Sciatic nerve (tissue), 2 donors: ENCODE measurements at regions of chr12 and their contacts with region 1.

Region 1: DNA sequence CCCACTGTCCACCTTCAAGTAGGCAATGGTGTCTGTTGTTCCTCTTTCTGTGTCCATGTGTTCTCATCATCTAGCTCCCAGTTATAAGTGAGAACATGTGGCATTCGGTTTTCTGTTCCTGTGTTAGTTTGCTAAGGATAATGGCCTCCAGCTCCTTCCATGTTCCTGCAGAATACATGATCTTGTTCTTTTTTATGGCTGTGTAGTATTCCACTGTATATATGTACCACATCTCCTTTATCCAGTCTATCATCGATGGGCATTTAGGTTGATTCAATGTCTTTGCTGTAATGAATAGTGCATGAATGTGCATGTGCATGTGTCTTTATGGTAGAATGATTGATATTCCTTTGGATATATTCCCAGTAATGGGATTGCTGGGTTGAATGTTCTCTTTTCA is 123.3 kb upstream of the LHX5 start:
- DNase-seq: no peak
- ATAC-seq: no peak

Region 2: DNA sequence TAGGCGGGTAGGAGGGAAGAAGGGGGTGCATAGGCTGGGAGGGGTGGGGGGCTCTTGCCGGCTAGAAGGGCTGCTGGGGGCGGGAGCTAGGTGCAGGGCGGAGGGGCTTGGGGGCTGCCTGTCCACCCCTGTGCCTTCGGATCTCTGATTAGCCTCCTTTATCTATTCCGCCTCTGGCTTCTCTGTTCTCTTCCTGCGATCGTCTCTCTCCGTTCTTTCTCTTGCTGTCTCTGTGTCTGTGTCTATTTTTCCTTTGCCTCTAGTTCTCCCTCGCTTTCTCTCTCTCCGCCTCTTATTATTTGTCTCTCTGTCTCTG is 43.5 kb after region 1 on chr12:
- intact Hi-C with region 1: loop called (anchors 1 kb)
- DNase-seq: no peak
- ATAC-seq: no peak